Gastrocnemius medialis (tissue), 4 donors: ENCODE measurements at regions of chrX and their contacts with region 1.

Region 1: DNA sequence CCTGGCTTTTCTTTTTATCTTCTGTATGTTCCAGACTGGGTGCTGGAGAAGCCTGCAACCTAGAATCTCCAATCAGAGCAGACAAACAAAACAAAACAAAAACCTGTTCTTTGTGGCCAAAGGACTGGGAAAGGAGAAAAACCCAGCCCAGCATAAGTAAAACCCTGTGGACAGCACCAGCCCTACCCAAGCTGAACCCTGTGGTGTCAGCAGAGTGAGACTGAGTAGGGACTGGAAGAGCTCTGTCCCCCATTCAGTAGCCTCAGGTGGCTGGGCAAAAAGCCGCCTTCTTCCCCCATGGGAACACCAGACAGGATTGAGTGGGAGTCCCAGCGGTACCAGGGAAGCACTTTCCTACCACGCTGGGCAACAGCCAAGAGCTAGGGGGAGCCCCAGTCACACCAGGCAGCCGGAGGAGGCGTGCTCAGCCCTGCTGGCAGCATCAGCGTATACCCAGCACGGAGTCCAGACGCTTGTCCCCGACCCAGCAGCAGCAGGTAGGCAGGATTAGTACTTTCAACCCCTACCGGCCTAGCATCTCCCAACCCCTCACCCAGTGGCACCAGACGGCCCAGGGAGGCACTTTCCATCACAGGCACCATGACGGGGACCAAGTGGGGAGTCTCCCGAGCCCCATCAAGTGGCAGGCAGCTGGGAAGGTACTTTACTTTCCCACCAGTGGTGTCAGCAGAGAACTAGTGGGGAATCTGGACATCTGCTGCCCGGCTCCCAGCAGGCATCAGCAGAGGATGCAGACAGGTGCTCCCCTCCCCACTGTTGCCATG is 8.6 kb upstream of the JADE3 start:
- DNase-seq: peak; percentile 45 to 60
- ATAC-seq: peak; percentile 60 to 84
- H3K4me3 ChIP-seq: peak overlapping the region in 3 of 4 donors; percentile 44 to 55 (median 50)
- H3K27ac ChIP-seq: no peak overlapping the region
- H3K4me1 ChIP-seq: no peaks in the 10 kb centered on the region
- H3K27me3 ChIP-seq: no peaks in the 10 kb centered on the region
- CTCF ChIP-seq: peak; percentile 38 to 63 (median 52)
- POLR2A ChIP-seq: no peak

Region 2: DNA sequence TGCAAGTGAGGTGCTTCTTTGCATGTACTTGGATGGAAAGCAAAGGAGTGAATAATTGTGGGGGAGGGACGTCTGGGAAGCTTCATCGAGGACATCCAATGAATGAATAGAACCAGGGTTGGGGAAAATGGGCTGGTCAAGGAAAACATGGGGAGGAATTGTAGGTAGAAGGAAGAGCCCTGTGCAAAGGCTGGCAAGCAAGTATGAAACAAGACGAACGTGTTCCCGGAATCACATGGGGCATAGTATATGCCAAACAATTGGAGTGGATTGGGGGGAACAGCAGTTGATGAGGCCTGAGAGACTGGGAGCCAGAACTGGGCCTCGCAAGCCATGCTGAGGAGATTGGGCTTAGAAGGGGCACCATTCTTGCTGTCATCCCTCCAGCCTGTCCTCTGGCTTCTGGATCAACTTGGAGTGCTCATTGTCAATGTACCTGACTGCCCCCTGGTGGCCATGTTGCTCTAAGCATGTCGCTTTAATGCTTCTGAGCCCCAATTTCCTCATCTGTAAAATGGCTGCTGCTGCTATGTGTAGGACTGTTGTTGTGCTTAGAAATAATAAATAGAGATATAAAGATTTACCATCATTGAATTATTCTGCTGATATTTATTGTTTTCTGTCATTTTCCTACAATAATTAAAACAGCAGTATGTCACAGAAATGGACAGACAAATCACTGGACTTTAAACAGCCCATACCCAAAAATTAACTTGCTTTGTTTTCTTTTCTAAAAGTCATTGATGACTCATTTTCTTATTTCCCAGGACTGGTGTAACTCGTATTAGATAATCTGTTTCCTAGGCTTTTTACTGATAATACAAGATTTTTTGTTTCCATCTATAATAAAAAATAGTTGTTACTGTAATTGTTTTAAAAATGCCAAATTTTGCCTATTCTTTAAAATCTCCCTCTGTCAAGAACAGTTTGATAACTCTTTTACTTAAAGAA is 75.0 kb after region 1 on chrX:
- in situ Hi-C with region 1: no loop called
- intact Hi-C with region 1: loop called (anchors 2 kb)
- DNase-seq: peak in 1 of 2 donors; percentile 16
- ATAC-seq: peak in 1 of 2 donors; percentile 41
- H3K4me3 ChIP-seq: no peak overlapping the region
- H3K27ac ChIP-seq: no peak overlapping the region
- H3K4me1 ChIP-seq: no peaks in the 10 kb centered on the region
- H3K27me3 ChIP-seq: no peaks in the 10 kb centered on the region
- CTCF ChIP-seq: peak; percentile 16 to 60 (median 38)
- POLR2A ChIP-seq: no peak

Region 3: DNA sequence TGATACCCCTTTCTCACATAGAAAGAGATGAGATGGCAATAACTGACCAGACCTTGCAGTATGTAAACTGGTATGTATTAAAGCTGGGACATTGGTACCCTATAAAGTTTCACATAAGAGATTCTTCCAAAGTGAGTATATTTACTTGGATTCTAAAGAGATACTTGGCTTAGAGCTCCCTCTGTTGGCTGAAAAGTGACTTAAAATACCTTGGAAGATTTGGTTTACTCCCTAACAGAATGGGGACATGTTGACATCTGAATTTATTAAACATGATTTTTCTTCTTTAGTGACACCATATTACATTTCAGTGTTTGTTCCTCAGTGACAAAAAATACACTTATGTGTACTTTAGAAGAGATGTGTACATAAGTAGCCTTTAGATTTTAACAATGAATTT is 126.7 kb after region 1 on chrX:
- in situ Hi-C with region 1: loop called in 1 of 4 experiments (anchors 10 kb)
- intact Hi-C with region 1: loop called (anchors 1 kb)
- DNase-seq: no peak
- ATAC-seq: no peak
- H3K4me3 ChIP-seq: no peak overlapping the region
- H3K27ac ChIP-seq: no peak overlapping the region
- H3K4me1 ChIP-seq: no peaks in the 10 kb centered on the region
- H3K27me3 ChIP-seq: peaks cover 0 to 3% (median 0%) of the 10 kb centered on the region in 3 donors
- CTCF ChIP-seq: peak; percentile 14 to 55 (median 44)
- POLR2A ChIP-seq: no peak

Region 4: GRCh38 chrX:47093248-47093647 is 189.6 kb after region 1 on chrX:
- in situ Hi-C with region 1: loop called in 1 of 4 experiments (anchors 10 kb)
- intact Hi-C with region 1: loop called (anchors 5 kb)
- DNase-seq: no peak
- ATAC-seq: no peak
- H3K4me3 ChIP-seq: no peak overlapping the region
- H3K27ac ChIP-seq: no peak overlapping the region
- H3K4me1 ChIP-seq: no peaks in the 10 kb centered on the region
- H3K27me3 ChIP-seq: peaks cover 0 to 3% (median 0%) of the 10 kb centered on the region in 3 donors
- CTCF ChIP-seq: peak in 3 of 5 experiments; percentile 15 to 33 (median 25)
- POLR2A ChIP-seq: no peak